ENCODE measurements at regions of chr16 and their contacts with region 1.

Region 1: DNA sequence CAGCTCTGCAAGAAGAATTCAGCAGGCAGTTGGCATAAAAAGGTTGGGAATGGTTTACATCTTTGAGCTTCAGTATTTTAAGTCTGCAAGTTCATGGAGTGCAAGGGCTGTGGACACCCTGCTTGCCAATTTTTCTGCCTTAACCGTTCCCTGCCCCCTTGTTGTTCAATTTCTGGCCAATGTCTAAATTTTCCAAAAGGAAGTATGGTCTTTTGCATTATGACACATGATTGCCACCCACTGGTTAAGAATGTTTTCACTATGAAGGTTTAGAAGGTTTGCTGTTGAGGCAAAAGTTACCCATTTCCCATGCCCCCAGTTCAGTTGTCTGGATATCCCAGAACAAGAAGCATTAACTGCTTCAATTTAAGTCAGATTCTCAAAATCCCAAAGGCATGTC is 441.9 kb downstream of the CDH13 start:
- DNase-seq: no peak
- H3K27ac ChIP-seq: no peak overlapping the region
- CTCF ChIP-seq: no peak

Region 2: DNA sequence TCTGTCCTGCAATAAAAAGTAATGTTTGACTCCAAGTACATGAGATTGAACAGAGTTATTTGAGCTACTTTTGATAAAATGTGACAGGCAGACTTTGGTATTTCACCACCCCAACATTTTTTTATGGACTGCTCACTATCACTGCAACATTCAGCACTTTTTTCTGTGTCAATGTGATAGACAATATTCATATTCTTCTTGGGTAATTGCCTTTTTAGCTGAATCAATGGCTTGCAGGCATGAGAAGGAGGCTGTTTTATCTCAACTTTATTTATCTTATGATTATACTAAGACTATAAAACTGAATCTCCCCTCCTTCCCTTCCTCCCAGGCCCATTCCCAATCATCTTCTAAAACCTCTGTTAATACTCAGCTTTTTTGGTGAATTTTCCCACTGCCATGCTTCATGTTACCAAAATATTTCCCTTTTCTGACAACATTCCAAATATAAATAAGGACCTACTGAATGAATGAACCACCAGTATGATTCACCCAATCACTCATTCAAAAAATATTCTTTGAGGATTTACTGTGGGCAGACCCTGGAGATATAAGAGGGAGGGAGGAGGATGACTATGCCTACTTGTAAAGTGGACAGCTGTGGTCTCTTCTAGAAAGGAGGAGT is 374.3 kb before region 1 on chr16:
- CTCF ChIA-PET with region 1: interaction called, 12 read pairs
- POLR2A ChIA-PET with region 1: no interaction called
- DNase-seq: peak; percentile 26
- H3K27ac ChIP-seq: no peak overlapping the region
- CTCF ChIP-seq: no peak

Region 3: GRCh38 chr16:83046664-83047063 is 22.0 kb before region 1 on chr16:
- CTCF ChIA-PET with region 1: no interaction called
- POLR2A ChIA-PET with region 1: no interaction called
- DNase-seq: no peak
- H3K27ac ChIP-seq: no peak overlapping the region
- CTCF ChIP-seq: no peak